Activated CD4-positive, alpha-beta memory T cell treated with anti-CD3 and anti-CD28 coated beads, Interleukin-2, amount 10 ng/mL, durations not matched to agents 7 days and 5 days (primary cell): ENCODE measurements at regions of chr6 and their contacts with region 1.

Region 1: DNA sequence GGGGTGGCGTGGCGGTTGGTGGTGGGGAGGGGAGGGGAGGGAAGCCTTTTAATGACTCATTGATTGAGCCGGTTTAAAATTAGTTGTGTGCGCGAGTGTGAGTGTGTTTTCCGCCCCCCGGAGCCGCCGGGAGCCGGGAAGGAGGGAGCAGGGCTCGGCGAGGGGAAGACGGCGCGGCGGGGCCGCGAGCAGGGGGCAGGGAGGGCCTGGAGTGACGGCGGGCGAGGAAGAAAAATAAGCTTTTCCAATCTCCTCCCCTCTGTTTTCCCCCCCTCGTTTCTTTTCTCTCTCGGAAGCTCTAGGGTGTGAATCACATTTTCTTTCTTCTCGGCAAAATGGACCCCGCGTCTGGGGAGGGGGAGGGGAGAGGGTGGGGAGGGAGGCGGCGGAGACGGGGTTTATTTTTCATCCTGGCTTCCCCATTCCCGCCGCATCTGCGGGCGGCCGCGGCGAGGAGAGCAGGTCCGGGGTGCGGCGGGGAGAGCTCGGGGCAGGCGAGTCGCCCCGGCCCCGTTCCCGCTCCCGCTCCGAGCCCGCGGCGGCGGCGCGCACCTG is 847 bp downstream of the BICRAL start:
- DNase-seq: peak; percentile 64
- H3K4me3 Mint-ChIP-seq: peak overlapping the region; percentile 95
- H3K27ac Mint-ChIP-seq: peak overlapping the region; percentile 100
- H3K4me1 Mint-ChIP-seq: peaks cover 18% of the 10 kb centered on the region
- H3K27me3 Mint-ChIP-seq: no peaks in the 10 kb centered on the region

Region 2: DNA sequence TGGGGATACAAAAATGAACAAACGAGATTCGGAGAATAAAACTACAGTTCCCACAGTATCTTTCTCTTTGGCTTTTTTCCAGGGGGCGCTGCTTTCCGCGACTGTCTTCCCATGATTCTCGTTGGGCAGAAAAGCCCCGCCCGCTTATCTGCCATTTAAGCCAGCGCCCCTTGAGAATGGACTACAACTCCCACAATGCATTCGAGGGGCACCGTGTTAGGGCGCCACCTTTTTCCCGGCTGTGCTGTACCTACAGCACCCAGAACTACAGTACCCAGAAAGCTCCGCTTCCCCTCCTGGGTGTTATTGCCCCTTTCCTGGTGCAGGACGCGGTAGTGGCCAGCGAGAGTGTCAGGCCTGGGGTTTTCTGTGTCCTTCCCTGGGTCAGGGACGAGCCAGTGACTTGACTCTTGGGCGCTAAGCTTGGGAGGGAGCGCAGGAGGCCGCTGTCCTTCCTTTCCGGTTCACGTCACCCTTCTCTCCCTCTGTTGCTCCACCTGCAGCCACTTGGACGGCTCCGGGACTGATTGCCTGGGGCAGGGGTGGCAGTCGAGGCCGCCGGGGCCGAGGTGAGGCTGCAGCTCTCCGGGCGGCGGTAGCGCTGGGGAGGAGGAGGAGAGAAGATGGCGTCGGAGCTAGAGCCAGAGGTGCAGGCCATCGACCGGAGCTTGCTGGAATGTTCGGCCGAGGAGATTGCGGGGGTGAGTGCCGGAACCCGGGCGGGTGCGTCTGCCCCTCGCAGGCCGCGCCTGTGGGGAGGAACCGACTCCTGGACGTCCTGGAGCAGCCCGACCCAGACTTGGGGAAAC is 218.8 kb before region 1 on chr6 and contains the start of gene UBR2:
- CTCF ChIA-PET with region 1: interaction called, 3 read pairs
- POLR2A ChIA-PET with region 1: interaction called, 10 read pairs
- DNase-seq: peak; percentile 95
- H3K4me3 Mint-ChIP-seq: peak within 1 kb of the TSS; percentile 92
- H3K27ac Mint-ChIP-seq: peak within 1 kb of the TSS; percentile 83
- H3K4me1 Mint-ChIP-seq: peaks cover 33% of the 10 kb centered on the region
- H3K27me3 Mint-ChIP-seq: no peaks in the 10 kb centered on the region
- total RNA-seq, gene UBR2: 34.0 to 36.2 TPM

Region 3: DNA sequence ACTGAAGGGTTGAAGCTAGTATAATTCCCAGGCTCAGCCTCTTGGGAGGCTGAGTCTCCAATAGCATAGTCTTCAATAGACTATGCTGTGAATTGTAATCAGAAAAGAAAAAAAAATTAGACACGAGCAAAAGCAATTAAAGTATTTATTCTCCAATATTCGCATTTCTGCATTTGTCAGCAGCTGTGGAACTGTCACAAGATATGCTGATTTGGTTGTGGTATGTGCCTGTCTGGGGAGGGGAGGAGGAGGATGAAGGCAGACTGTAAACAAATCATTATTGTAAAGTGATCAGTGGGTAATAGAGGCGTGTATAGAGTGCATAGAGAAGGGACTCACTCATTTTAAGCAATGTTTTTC is 11.0 kb before region 1 on chr6:
- CTCF ChIA-PET with region 1: interaction called, 31 read pairs
- POLR2A ChIA-PET with region 1: interaction called, 327 read pairs
- DNase-seq: peak; percentile 43
- H3K4me3 Mint-ChIP-seq: peak overlapping the region; percentile 62
- H3K27ac Mint-ChIP-seq: peak overlapping the region; percentile 100
- H3K4me1 Mint-ChIP-seq: peaks cover 64% of the 10 kb centered on the region
- H3K27me3 Mint-ChIP-seq: no peaks in the 10 kb centered on the region